GM10248 (cell line): ENCODE measurements at regions of chr2 and their contacts with region 1.

Region 1: DNA sequence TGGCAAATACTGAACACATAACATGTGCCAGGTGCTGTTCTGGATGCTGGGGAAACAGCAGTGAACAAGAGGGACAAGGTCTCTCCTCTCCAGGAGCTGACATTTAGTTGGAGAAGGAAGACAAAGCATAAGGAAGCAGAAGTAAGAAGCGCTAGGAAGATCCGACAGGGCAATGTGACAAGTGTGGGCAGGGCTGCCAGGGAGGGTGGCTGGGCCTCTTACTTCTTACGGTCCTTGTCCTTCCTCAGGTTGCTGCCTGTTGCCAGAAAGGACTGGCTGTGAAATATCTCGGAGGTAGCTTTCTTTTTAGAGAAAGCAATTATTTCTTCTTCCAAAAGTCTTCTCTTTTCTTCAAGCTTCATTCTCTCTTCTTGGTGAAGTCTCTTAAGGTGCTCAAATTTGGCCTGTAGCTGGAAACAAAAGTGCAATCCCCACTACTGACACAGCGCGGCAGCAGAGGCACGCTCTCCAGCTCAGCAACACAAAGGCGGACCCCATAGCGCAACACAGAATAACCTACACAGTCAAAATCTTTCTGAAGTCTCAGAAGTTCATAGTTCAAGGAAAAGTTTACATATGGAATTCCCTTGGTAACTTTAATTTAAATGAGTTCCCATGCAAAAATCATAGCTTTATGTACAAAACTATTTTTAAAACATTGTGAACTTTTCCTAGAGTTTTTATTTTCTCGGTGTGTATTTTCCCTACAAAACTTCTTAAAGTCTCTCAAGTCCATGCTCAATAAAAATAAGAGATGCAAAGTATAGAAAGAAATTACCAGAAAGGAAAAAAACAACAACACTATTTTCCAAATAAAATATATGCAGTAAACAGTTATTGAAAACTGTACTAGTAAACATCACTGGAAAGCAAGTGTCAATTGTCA is 67.7 kb downstream of the SEPTIN10 start:
- DNase-seq: peak; percentile 40
- CTCF ChIP-seq: peak; percentile 89

Region 2: DNA sequence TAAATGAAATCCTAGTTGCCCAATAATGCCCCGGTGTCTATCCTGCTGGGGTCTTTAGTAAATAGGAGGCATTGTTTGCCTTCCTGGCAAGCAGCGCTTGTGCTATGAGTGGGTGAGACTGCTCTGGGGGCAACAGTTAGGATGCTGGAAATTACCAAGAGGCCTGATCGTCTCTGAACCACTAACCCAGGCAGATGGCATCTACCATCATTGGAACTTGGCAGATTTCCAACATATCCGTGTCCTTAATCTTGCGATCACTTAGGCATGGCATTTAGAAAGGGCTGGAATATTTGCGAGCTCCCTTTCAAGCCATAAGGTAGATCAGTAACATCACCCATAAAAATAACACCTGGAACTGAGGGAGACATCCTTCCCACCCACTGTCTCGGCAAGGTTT is 435.9 kb before region 1 on chr2:
- CTCF ChIA-PET with region 1: no interaction called
- POLR2A ChIA-PET with region 1: no interaction called
- DNase-seq: no peak
- CTCF ChIP-seq: no peak

Region 3: GRCh38 chr2:109230941-109231420 is 315.1 kb before region 1 on chr2:
- CTCF ChIA-PET with region 1: no interaction called
- POLR2A ChIA-PET with region 1: no interaction called
- DNase-seq: no peak
- CTCF ChIP-seq: no peak

Region 4: DNA sequence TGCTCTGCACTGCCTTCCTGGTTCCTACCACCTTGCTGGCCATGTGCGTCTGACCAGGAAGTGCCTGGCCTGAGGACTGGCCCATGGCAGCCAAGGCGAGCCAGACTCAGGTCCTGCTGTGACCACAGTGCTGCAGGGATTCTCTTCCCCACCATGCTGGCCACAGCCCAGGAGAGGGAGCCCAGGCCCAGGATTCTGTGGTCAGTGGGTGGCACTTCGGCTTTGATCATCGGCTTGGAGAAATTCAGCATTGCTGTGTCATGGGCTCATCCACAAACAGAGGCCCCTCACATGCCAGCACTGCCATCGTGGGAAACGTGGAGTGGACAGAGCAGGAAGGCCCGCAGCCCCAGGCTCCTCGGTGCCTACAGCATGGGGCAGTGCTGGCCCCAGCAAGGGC is 143.9 kb before region 1 on chr2:
- CTCF ChIA-PET with region 1: no interaction called
- POLR2A ChIA-PET with region 1: no interaction called
- DNase-seq: no peak
- CTCF ChIP-seq: no peak

Region 5: GRCh38 chr2:109510136-109511028 is 35.7 kb before region 1 on chr2:
- CTCF ChIA-PET with region 1: interaction called, 16 read pairs
- POLR2A ChIA-PET with region 1: no interaction called
- DNase-seq: peak; percentile 82
- CTCF ChIP-seq: peak; percentile 85

Region 6: GRCh38 chr2:109529532-109530449 is 16.3 kb before region 1 on chr2:
- CTCF ChIA-PET with region 1: interaction called, 73 read pairs
- POLR2A ChIA-PET with region 1: no interaction called
- DNase-seq: no peak
- CTCF ChIP-seq: no peak

Region 7: GRCh38 chr2:109575373-109575772 is 29.3 kb after region 1 on chr2:
- CTCF ChIA-PET with region 1: interaction called, 18 read pairs
- POLR2A ChIA-PET with region 1: no interaction called
- DNase-seq: no peak
- CTCF ChIP-seq: no peak

Region 8: DNA sequence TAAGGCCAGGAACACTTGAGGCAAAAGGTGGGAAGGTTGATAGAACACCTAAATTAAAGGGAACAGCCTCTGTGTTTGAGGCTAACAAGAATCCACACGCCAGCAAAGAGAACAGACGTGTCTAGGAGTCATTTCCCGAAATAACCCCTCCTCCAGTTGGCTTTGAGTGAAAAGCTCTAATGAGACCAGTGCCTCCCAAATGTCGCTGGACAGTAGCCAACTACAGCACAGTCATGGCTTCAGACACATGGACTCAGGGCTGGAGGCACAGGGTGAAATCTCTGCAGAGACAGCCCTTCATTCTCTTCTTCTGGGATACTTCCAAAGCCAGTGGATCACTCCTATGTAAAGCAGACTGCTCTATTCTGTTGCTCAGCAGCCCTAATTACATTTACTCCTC is 117.7 kb after region 1 on chr2:
- CTCF ChIA-PET with region 1: interaction called, 82 read pairs
- POLR2A ChIA-PET with region 1: no interaction called
- DNase-seq: no peak
- CTCF ChIP-seq: no peak

Region 9: DNA sequence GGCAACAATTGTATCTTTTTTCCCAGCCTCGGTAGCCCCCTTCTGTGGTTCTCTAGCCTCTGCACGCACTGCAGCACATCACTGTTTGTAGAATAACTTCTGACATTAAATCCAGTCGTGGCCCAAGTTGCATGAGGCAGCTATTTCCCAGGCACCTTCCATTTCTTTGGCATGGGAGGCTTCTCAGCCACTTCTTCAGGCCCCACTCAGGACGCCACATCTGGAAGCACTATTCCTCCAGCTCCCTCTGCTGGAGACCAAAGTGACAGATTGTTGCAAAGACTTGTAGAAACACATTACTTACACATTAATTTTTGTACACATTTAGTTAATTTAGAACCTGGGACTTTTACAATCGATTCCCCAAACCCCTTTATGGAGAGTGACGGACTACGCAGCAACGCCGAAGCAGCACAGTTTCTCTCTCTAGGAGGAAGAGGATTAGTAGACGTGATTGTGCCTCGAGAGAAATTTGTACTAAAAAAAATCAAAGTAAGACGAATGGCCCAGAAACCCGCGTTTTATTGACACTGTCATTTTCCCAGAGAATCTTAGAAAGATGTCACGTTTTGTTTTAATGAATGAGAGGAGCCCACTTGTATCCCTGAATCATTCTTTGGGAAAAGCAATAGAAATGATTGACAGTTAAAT is 190.2 kb after region 1 on chr2:
- CTCF ChIA-PET with region 1: interaction called, 78 read pairs
- POLR2A ChIA-PET with region 1: no interaction called
- DNase-seq: peak; percentile 18
- CTCF ChIP-seq: peak; percentile 51